HepG2 (cell line): ENCODE measurements at regions of chr7 and their contacts with region 1.

Region 1: DNA sequence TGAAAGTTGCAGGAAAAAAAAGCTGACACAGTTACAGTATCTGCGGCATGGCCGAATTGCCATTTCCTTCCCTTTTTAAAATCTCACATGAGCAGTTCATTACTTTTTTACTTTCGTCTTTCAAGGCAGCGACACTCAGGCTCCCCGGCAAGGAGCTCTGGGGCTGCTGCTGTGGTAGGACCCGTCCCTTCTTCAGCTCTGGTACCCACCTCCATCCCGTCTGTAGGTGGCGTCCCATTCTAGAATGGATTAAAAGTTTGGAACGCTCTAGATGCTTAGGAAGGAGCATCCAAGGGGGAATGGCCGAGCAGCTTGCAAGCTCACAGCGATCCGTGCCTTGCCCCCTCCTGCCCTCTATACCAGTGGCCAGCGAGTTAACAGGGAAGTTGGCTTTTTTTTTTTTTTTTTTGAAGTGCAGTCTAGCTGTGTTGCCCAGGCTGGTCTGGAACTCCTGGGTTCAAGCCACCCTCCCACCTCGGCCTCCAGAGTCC is 22.8 kb upstream of the TTYH3 start:
- DNase-seq: peak; percentile 62
- ATAC-seq: peak; percentile 66
- H3K4me3 ChIP-seq: peak overlapping the region in 1 of 3 experiments; percentile 3; a peak in 1 of 6 replicates
- H3K27ac ChIP-seq: no peak overlapping the region
- H3K4me1 ChIP-seq: peaks cover 54% of the 10 kb centered on the region
- H3K27me3 ChIP-seq: peaks cover 0 to 6% of the 10 kb centered on the region in 2 experiments; a peak in 1 of 5 replicates
- CTCF ChIP-seq: peak; percentile 80
- EP300 ChIP-seq: no peak
- POLR2A ChIP-seq: no peak
- RAD21 ChIP-seq: 0 out of 2 replicates have a peak, but pooled peaks have one; percentile 38

Region 2: DNA sequence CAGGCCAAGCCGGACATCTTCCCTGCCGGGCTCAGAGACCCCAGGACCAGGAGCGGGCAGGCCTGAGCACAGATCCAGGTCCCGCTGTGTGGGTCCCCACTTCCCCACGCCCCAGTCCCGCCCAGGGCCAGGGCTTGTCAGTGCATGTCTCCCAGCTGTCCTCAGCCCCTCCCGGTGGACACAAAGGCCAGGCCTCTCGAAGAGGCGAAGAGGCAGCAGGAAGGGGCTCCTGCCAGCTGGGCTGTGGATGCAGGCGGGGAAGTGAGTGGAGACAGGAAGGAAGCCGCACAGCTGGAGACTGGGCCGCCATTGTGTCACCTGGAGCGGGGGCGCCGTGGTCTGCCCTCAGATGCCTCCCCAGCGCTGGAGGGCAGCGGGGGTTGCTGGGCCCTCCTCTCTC is 137.6 kb before region 1 on chr7:
- CTCF ChIA-PET with region 1: no interaction called
- POLR2A ChIA-PET with region 1: no interaction called
- in situ Hi-C with region 1: no loop called
- intact Hi-C with region 1: no loop called
- DNase-seq: no peak
- ATAC-seq: no peak; the same call in 2 of the 3 replicates
- H3K4me3 ChIP-seq: 0 out of 6 replicates have a peak overlapping the region, but pooled peaks of 1 of the 3 experiments have one; percentile 28
- H3K27ac ChIP-seq: no peak overlapping the region
- H3K4me1 ChIP-seq: peaks cover 45% of the 10 kb centered on the region
- H3K27me3 ChIP-seq: peaks cover 8 to 31% of the 10 kb centered on the region in 2 experiments; a peak in 4 of 5 replicates
- CTCF ChIP-seq: 0 out of 2 replicates have a peak, but pooled peaks have one; percentile 12
- EP300 ChIP-seq: no peak
- POLR2A ChIP-seq: no peak
- RAD21 ChIP-seq: no peak

Region 3: DNA sequence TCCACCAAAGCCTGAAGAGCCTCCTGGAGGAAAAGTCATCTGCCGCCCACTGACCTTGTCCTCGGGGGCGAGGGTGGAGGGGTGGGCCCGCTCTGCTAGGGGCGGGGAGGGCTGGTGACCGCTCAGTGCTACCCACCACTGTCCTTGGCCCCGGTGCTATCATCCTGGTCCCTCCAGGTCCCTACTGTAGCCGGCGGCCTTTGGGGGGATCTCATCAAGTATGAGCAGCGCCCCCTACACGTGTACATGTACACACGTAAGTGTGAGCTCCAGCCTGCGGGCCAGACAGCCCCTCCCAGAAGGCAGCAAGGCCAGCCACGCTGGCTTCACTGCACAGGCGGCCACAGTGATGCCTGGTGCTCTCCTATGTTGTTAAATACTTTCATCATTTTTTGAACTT is 42.4 kb after region 1 on chr7:
- CTCF ChIA-PET with region 1: interaction called, 7 read pairs
- POLR2A ChIA-PET with region 1: no interaction called
- in situ Hi-C with region 1: no loop called
- intact Hi-C with region 1: loop called (anchors 5 kb)
- DNase-seq: peak; percentile 58
- ATAC-seq: peak; percentile 75
- H3K4me3 ChIP-seq: no peak overlapping the region
- H3K27ac ChIP-seq: no peak overlapping the region
- H3K4me1 ChIP-seq: no peaks in the 10 kb centered on the region; the same call in 1 of the 2 replicates
- H3K27me3 ChIP-seq: no peaks in the 10 kb centered on the region
- CTCF ChIP-seq: peak; percentile 69
- EP300 ChIP-seq: no peak
- POLR2A ChIP-seq: no peak
- RAD21 ChIP-seq: 0 out of 2 replicates have a peak, but pooled peaks have one; percentile 33